ENCODE measurements at regions of chr4 and their contacts with region 1.

Region 1: GRCh38 chr4:48109413-48110263 is 24.4 kb downstream of the TXK start:
- DNase-seq: peak; percentile 44
- H3K4me3 ChIP-seq: no peak overlapping the region
- H3K27ac ChIP-seq: peak overlapping the region in 1 of 2 experiments; percentile 43; a peak in 3 of 4 replicates
- H3K4me1 ChIP-seq: peaks cover 0 to 45% of the 10 kb centered on the region in 2 experiments; a peak in 2 of 4 replicates
- H3K27me3 ChIP-seq: no peaks in the 10 kb centered on the region
- CTCF ChIP-seq: peak; percentile 72
- EP300 ChIP-seq: no peak
- RAD21 ChIP-seq: peak; percentile 60

Region 2: GRCh38 chr4:47939456-47939855 is 170.2 kb before region 1 on chr4:
- CTCF ChIA-PET with region 1: no interaction called
- POLR2A ChIA-PET with region 1: no interaction called
- DNase-seq: no peak
- H3K4me3 ChIP-seq: no peak overlapping the region
- H3K27ac ChIP-seq: no peak overlapping the region
- H3K4me1 ChIP-seq: no peaks in the 10 kb centered on the region; a peak in 1 of 4 replicates
- H3K27me3 ChIP-seq: no peaks in the 10 kb centered on the region
- CTCF ChIP-seq: no peak
- EP300 ChIP-seq: no peak
- RAD21 ChIP-seq: no peak

Region 3: GRCh38 chr4:48122756-48123155 is 13.1 kb after region 1 on chr4:
- CTCF ChIA-PET with region 1: interaction called, 10 read pairs
- POLR2A ChIA-PET with region 1: no interaction called
- DNase-seq: no peak
- H3K4me3 ChIP-seq: no peak overlapping the region
- H3K27ac ChIP-seq: no peak overlapping the region
- H3K4me1 ChIP-seq: peaks cover 0 to 12% of the 10 kb centered on the region in 2 experiments; a peak in 2 of 4 replicates
- H3K27me3 ChIP-seq: no peaks in the 10 kb centered on the region
- CTCF ChIP-seq: no peak
- EP300 ChIP-seq: no peak
- RAD21 ChIP-seq: no peak